ENCODE measurements at regions of chr2 and their contacts with region 1.

Region 1: DNA sequence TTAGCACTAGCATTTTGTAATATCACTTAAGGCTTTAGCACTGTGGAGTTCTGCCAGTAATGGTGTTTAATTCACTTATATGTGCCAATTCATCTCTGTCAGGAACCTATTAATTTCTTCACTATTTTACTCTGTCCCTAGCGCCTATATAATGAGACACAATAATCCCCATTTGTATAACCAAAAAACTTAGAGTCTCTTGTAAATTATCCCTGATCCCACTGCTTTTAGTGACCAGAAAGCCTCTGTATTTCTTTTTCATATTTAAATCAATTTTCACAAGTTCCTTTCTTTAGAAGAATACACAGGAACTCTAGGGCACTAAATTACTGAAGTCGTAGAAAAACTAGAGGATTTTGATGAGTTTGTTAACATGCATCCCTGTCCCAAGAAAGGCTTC is 242.7 kb upstream of the NRP2 start:
- DNase-seq: no peak
- H3K4me3 ChIP-seq: no peak overlapping the region
- H3K27ac ChIP-seq: no peak overlapping the region
- H3K4me1 ChIP-seq: no peaks in the 10 kb centered on the region
- H3K27me3 ChIP-seq: no peaks in the 10 kb centered on the region
- CTCF ChIP-seq: no peak
- EP300 ChIP-seq: no peak
- POLR2A ChIP-seq: no peak

Region 2: DNA sequence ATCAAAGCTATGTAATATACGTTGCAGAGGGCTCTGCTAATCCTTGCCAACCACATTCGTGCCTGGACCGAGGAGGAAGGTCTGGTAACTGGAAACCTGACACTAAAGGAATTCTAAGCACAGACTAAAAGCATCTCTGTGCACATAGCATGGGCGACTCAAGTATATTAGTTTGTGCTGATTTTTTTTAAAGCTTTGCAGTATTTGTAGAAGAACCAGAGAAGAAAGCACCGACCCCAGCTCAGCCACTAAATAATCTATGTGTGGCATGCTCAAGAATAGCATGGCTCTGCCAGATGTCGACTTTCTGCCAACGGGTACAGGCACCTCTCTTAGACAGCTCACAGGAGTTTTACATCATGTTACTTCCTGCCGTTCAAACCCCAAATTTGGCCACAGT is 169.5 kb after region 1 on chr2:
- intact Hi-C with region 1: loop called (anchors 5 kb)
- DNase-seq: no peak
- H3K4me3 ChIP-seq: no peak overlapping the region
- H3K27ac ChIP-seq: no peak overlapping the region
- H3K4me1 ChIP-seq: no peaks in the 10 kb centered on the region
- H3K27me3 ChIP-seq: no peaks in the 10 kb centered on the region
- CTCF ChIP-seq: no peak
- EP300 ChIP-seq: no peak
- POLR2A ChIP-seq: no peak